HepG2 (cell line): ENCODE measurements at regions of chr11 and their contacts with region 1.

Region 1: DNA sequence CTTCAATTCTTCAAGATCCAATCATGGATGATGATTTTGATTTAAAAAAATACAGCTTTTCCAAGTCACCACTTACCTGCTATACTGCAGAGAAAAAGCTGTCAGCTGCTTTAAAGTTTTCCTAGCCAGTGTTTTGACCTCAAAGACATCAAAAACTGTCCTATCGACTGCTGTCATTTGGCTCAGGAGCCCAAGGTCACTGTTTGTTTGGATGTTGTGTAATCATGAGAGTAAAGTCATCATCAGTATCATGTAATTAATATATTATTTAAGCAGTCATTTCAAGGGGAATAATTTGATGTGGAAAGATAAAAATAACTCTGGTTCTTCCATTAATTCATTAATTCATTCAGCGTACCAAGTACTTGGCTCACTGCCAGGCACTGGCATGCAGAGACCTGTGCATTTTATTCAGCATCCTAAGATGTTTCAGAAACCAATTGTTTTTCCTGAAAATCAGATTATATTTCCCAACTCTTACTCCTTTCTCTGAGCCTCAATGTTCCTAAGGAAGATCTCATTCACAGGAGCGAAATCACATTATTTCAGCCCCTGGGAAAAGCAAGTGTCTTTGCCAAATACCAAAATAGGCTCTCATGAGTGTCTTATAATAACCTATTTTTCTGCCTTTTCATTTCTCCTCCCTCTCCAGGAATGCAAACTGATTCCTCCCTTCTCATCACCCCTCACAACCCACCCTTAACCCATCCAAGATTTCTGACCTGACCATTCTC is 59.9 kb downstream of the SLC1A2 start:
- DNase-seq: peak; percentile 76
- ATAC-seq: peak; percentile 41
- H3K4me3 ChIP-seq: peak overlapping the region; percentile 59 to 66 (median 64)
- H3K27ac ChIP-seq: peak overlapping the region; percentile 96
- H3K4me1 ChIP-seq: peaks cover 86% of the 10 kb centered on the region
- H3K27me3 ChIP-seq: no peaks in the 10 kb centered on the region
- CTCF ChIP-seq: no peak
- EP300 ChIP-seq: peak in 1 of 2 experiments; percentile 86; a peak in 2 of 4 replicates
- POLR2A ChIP-seq: no peak; a peak in 1 of 4 replicates
- RAD21 ChIP-seq: no peak

Region 2: GRCh38 chr11:34926101-34926830 is 433.2 kb before region 1 on chr11:
- CTCF ChIA-PET with region 1: no interaction called
- POLR2A ChIA-PET with region 1: interaction called, 15 read pairs
- in situ Hi-C with region 1: no loop called
- intact Hi-C with region 1: no loop called
- DNase-seq: peak; percentile 47
- ATAC-seq: no peak
- H3K4me3 ChIP-seq: no peak overlapping the region
- H3K27ac ChIP-seq: no peak overlapping the region
- H3K4me1 ChIP-seq: peaks cover 95% of the 10 kb centered on the region
- H3K27me3 ChIP-seq: no peaks in the 10 kb centered on the region
- CTCF ChIP-seq: peak; percentile 69
- EP300 ChIP-seq: no peak
- POLR2A ChIP-seq: no peak
- RAD21 ChIP-seq: peak; percentile 57; the same call in 1 of the 2 replicates

Region 3: DNA sequence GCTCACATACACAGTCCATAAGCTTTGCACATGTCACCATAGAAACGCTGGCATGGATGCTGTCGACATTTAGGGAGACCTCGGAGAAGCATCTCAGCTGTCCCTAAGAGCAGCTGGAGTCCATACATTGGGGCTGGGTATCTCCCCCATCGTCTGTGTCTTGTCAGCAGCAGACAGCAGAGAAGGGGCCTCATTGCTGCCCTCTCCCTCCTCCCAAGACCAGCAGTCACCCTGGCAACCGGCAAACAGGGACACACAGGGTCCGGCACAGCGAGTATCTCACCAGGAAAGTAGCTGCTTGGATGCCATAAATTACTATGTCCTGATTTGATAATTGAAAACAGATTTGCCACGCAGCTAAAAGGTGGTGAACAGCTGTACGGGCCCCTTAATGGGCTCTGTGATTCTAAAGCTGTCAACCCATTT is 136.1 kb before region 1 on chr11:
- CTCF ChIA-PET with region 1: no interaction called
- POLR2A ChIA-PET with region 1: no interaction called
- in situ Hi-C with region 1: no loop called
- intact Hi-C with region 1: no loop called
- DNase-seq: no peak
- ATAC-seq: no peak
- H3K4me3 ChIP-seq: no peak overlapping the region
- H3K27ac ChIP-seq: no peak overlapping the region
- H3K4me1 ChIP-seq: 0 out of 2 replicates have a peak, but pooled peaks cover 6% of the 10 kb centered on the region
- H3K27me3 ChIP-seq: peaks cover 0 to 8% of the 10 kb centered on the region in 2 experiments; a peak in 2 of 5 replicates
- CTCF ChIP-seq: no peak
- EP300 ChIP-seq: no peak
- POLR2A ChIP-seq: no peak
- RAD21 ChIP-seq: no peak

Region 4: DNA sequence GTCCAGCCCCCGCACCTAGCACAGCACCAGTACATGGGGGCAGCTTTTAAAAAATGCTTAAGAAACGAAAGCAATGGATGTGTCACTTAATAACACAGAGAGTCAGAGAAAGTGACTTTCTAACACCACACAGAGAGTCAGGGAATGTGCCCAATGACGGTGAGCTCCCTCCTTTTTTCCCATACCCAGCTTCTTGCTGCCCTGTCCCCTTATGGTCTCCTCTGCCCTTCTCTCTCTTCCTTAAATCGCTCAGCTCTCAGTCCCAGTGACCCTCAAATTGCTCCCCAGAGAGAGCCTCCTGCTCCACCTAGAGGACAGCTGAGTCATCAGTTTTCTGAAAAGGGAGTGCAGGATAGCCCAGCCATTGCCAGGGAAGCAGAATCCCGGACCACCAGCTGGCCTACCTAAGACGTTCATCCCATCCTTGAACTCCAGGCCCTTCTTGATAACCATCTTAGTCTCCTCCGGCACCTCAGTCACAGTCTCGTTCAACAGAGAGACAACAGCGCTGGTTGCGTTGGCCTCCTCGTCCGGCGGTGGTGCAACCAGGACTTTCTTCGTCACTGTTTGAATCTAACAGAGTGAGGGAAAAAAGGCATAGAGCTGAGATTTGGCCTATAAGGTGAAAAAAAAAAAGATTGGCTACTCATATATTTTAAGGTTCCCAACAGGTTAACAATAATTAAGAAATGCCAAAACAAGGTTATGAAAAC is 53.7 kb before region 1 on chr11:
- CTCF ChIA-PET with region 1: no interaction called
- POLR2A ChIA-PET with region 1: interaction called, 22 read pairs
- in situ Hi-C with region 1: no loop called
- intact Hi-C with region 1: no loop called
- DNase-seq: peak; percentile 12
- ATAC-seq: peak; percentile 20; the same call in 1 of the 3 replicates
- H3K4me3 ChIP-seq: no peak overlapping the region
- H3K27ac ChIP-seq: peak overlapping the region; percentile 87
- H3K4me1 ChIP-seq: peaks cover 26% of the 10 kb centered on the region
- H3K27me3 ChIP-seq: no peaks in the 10 kb centered on the region
- CTCF ChIP-seq: peak; percentile 47
- EP300 ChIP-seq: no peak
- POLR2A ChIP-seq: no peak
- RAD21 ChIP-seq: no peak

Region 5: GRCh38 chr11:35337136-35337918 is 22.2 kb before region 1 on chr11:
- CTCF ChIA-PET with region 1: no interaction called
- POLR2A ChIA-PET with region 1: interaction called, 22 read pairs
- in situ Hi-C with region 1: no loop called
- intact Hi-C with region 1: no loop called
- DNase-seq: peak; percentile 85
- ATAC-seq: peak; percentile 86
- H3K4me3 ChIP-seq: no peak overlapping the region
- H3K27ac ChIP-seq: peak overlapping the region; percentile 47
- H3K4me1 ChIP-seq: peaks cover 29% of the 10 kb centered on the region
- H3K27me3 ChIP-seq: no peaks in the 10 kb centered on the region
- CTCF ChIP-seq: no peak
- EP300 ChIP-seq: peak in 1 of 2 experiments; percentile 44; a peak in 1 of 4 replicates
- POLR2A ChIP-seq: no peak
- RAD21 ChIP-seq: no peak

Region 6: DNA sequence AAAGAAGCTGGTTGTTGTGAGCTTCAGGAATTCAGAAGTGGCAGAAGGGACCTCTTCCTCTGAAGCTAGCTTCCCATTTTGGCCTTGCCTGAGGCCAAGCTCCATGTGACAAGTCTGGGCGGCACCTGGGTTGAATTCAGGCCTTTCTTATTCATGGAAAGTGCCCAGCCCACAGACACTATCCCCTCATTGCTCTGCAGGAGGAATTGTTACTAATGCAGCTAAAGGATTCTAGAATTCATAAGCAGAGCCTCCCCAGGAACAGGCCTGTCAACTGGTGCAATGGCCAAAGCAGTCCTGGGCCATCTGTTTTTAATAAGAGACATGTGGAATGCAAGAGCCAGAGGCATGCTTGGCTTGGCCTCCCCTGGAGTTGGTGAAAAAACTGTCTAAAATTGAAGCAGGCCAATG is 11.6 kb before region 1 on chr11:
- CTCF ChIA-PET with region 1: no interaction called
- POLR2A ChIA-PET with region 1: interaction called, 19 read pairs
- in situ Hi-C with region 1: no loop called
- intact Hi-C with region 1: no loop called
- DNase-seq: no peak
- ATAC-seq: no peak
- H3K4me3 ChIP-seq: no peak overlapping the region
- H3K27ac ChIP-seq: peak overlapping the region; percentile 53
- H3K4me1 ChIP-seq: peaks cover 44% of the 10 kb centered on the region
- H3K27me3 ChIP-seq: no peaks in the 10 kb centered on the region
- CTCF ChIP-seq: no peak
- EP300 ChIP-seq: no peak
- POLR2A ChIP-seq: no peak
- RAD21 ChIP-seq: no peak

Region 7: DNA sequence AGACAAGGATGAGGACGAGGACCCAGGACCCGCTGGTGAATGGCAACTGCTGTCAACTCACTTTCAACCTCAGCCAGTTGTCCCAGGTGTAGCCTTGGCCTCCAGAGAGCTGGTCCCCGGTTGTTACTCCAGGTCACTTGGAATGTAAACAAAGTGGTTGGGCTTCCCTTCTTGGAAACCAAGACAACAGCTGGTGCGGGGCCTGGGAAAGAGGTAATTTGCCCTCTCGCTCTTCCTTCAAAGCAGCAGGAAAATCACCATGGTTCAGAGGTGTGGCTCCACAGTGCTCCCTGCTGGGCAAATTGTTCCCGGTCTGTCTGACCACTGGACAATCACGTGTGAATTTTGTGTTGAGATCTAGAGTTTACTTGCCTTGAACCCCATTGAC is 44.9 kb after region 1 on chr11:
- CTCF ChIA-PET with region 1: no interaction called
- POLR2A ChIA-PET with region 1: no interaction called
- in situ Hi-C with region 1: no loop called
- intact Hi-C with region 1: no loop called
- DNase-seq: peak; percentile 18
- ATAC-seq: peak; percentile 84
- H3K4me3 ChIP-seq: peak overlapping the region in 1 of 3 experiments; percentile 11; a peak in 1 of 6 replicates
- H3K27ac ChIP-seq: no peak overlapping the region
- H3K4me1 ChIP-seq: peaks cover 37% of the 10 kb centered on the region
- H3K27me3 ChIP-seq: no peaks in the 10 kb centered on the region
- CTCF ChIP-seq: peak; percentile 74
- EP300 ChIP-seq: 0 out of 4 replicates have a peak, but pooled peaks of 1 of the 2 experiments have one; percentile 19
- POLR2A ChIP-seq: no peak
- RAD21 ChIP-seq: no peak